Mammary epithelial cell (primary cell): ENCODE measurements at regions of chr11 and their contacts with region 1.

Region 1: DNA sequence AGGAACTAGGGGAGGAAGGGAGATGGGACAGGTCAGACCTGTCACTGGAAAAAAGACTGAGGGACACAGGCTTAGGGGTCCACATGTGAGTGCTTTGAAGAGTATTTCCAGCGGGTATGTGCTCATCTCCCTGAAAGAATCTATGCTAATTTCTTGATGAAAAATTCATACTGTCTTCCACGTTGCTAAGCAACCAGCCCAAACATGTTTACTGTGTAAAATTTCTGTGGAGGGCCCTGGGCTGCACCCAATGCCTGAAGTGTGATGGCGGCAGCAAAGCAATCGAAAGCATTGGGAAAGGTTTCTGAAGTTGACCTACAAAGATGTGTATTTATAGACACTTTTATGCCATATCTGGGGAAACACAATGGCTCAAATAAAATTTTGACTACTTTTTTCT is 7.4 kb downstream of the SYT13 start:
- DNase-seq: no peak
- H3K4me3 ChIP-seq: no peak overlapping the region
- H3K27ac ChIP-seq: no peak overlapping the region
- H3K4me1 ChIP-seq: no peaks in the 10 kb centered on the region
- H3K27me3 ChIP-seq: no peaks in the 10 kb centered on the region
- CTCF ChIP-seq: no peak

Region 2: DNA sequence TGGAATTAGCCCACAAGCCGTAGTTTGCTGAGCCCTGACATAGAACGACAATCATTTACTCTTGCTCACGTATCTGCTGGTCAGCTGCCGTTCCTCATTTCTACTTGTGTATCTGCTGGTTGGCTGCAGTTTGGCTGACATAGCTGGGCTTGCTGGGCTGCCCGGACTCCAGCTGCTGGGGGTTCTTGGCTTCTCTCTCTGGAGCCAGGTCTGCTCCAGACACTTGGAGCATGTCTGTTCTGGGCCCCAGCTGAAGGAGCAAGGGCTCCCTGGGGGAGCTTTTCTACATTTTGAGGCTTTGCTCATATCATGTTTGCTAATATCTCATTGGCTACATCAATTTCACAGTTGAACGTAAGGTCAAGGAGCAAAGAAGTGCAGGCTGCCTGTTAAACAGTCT is 85.0 kb before region 1 on chr11:
- CTCF ChIA-PET with region 1: no interaction called
- dilution Hi-C with region 1: no loop called
- in situ Hi-C with region 1: no loop called
- intact Hi-C with region 1: no loop called
- DNase-seq: no peak
- H3K4me3 ChIP-seq: no peak overlapping the region
- H3K27ac ChIP-seq: no peak overlapping the region
- H3K4me1 ChIP-seq: no peaks in the 10 kb centered on the region
- H3K27me3 ChIP-seq: no peaks in the 10 kb centered on the region
- CTCF ChIP-seq: no peak

Region 3: DNA sequence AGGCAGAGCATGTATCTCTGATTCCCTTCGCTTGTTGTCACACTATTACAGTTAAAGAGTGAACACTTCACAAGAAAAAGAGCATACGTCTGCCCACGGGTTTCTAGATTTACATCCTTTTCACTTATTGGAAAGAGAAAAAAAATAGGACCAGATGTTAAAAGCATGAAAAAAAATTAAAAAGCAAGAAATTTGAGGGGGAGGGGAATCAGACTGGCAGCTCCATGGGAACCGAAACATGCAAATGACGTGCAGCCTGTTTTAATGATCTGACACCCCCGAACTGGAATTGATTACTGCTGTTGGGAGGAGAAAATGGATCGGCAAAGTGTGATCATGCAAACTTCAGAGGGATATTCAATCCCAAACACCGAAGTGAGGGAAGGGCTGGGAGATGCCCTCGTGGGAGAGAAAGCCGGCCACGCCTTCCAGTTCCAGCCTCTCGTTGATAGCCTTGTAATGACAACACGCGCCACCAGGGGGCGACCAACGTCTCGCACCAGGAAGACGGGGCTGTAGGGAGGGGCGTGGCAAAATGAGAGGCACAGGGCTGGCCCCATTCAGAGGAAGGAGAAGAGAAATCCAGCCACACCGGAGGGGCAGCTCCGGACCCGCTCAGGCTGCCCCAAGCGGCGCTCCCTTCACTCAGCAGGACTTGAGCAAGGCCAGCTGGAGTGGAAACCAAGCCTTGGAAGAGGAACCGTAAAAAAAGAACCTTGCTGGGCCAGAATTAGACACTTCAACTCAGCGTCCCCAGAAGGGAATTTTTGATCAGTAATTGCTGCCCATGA is 61.2 kb after region 1 on chr11:
- CTCF ChIA-PET with region 1: no interaction called
- dilution Hi-C with region 1: loop called (anchors 10 kb)
- in situ Hi-C with region 1: no loop called
- intact Hi-C with region 1: no loop called
- DNase-seq: peak; percentile 68
- H3K4me3 ChIP-seq: no peak overlapping the region
- H3K27ac ChIP-seq: no peak overlapping the region
- H3K4me1 ChIP-seq: peaks cover 11% of the 10 kb centered on the region
- H3K27me3 ChIP-seq: peaks cover 8% of the 10 kb centered on the region
- CTCF ChIP-seq: peak; percentile 84 to 85

Region 4: DNA sequence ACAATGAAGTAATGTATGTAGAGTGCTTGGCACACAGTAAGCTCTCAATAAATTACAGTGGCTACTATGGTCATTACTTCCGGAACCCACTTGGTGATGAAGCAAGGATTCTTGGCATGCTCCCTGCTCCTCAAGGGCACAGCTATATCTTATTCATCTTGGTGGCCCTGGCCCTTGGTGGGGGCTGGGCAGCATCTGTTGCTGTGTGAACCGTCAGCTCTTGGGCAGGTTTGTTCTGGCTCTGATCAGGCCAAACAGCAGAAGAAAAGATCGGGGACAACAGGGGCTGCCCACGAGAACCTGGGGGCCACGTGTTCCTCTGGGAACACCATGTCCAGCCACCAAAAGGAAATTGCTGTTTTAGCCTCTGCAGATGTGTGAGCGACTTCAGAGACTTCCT is 144.3 kb after region 1 on chr11:
- CTCF ChIA-PET with region 1: no interaction called
- dilution Hi-C with region 1: no loop called
- in situ Hi-C with region 1: no loop called
- intact Hi-C with region 1: no loop called
- DNase-seq: no peak
- H3K4me3 ChIP-seq: no peak overlapping the region
- H3K27ac ChIP-seq: no peak overlapping the region
- H3K4me1 ChIP-seq: no peaks in the 10 kb centered on the region
- H3K27me3 ChIP-seq: peaks cover under 1% of the 10 kb centered on the region
- CTCF ChIP-seq: no peak

Region 5: DNA sequence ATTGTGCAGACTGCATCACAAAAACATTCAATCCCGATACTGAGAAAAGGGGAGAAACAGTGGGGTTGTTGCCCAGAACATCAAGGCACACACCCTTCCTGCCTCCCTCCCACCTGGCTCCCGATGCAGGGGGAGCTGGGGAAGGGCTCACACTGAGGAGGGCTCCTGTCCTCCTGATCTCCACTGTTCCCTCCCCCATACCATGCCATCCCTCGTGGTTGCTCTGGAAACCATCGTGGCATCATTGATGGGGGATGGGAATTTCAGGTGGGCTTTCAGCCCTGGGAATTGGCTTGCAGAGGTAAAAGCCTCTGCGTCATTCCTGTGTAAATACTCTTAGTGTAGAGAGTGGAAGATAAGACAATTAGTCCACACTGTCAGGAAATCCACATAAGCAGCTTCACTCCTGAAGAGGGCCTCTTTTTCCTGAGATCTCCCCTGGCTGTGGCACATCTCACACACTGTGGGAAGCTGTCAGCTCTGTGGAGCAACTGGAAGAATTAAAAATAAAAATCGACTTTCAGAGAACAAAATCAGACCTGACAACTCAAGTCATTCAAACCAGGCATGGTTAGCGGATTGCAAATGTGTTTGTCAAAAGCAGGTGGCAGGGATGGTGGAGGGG is 210.7 kb after region 1 on chr11:
- CTCF ChIA-PET with region 1: no interaction called
- dilution Hi-C with region 1: no loop called
- in situ Hi-C with region 1: no loop called
- intact Hi-C with region 1: no loop called
- DNase-seq: no peak
- H3K4me3 ChIP-seq: no peak overlapping the region
- H3K27ac ChIP-seq: no peak overlapping the region
- H3K4me1 ChIP-seq: no peaks in the 10 kb centered on the region
- H3K27me3 ChIP-seq: no peaks in the 10 kb centered on the region
- CTCF ChIP-seq: no peak